A673 (cell line): ENCODE measurements at regions of chr15 and their contacts with region 1.

Region 1: DNA sequence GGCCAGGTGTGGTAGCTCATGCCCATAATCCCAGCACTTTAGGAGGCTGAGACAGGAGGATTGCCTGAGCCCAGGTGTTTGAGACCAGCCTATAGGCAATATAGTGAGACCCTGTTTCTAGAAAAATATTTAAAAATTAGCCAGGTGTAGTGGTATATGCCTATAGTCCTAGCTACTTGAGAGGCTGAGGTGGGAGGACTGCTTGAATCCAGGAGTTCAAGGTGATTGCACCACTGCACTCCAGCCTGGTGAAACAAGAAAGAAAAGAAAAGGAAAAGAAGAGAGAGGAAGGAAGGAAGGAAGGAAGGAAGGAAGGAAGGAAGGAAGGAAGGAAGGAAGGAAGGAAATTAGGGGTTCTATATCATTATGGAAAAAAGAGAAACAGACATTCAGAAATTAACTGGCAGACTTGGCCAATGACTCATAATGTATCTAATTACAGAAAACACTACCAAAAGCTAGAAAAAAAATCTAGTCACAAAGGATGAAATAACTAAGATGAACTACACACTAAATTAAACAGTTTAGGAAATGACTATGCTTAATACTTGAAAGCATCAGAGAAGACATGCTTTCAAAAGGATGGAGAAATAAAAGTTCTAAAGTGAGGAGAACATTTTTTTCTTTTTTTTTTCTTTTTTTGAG is 45.4 kb upstream of the TERB2 start:
- DNase-seq: peak; percentile 96
- H3K4me3 ChIP-seq: no peak overlapping the region
- H3K27ac ChIP-seq: peak overlapping the region; percentile 98
- H3K4me1 ChIP-seq: peaks cover 75% of the 10 kb centered on the region
- H3K27me3 ChIP-seq: no peaks in the 10 kb centered on the region
- CTCF ChIP-seq: no peak

Region 2: DNA sequence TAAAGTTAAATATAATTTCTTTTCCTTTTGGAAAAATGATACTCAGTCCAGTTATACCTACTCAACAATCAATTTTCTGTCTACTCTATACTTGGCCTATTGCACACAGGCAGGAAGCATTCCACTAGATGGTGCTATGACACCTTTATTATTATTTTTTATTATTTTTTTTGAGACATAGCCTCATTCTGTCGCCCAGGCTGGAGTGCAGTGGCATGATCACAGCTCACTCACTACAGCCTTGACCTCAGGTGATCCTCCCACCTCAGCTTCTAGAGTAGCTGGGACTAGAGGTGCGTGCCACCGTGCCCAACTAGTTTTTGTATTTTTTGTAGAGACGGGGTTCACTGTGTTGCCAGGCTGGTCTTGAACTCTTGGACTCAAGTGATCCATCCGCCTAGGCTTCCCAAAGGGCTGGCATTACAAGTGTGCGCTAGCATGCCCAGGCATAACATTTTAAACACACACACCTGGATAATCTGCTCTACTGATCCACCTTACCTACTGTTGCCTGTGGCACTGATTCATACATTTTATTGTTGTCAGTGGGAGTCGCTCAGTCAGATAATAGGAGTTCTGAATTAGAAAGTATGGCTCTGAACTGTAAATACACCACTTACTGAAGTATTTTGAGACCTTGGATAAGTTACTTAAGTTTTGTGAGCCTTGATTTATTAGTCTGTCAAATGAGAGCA is 317.9 kb before region 1 on chr15:
- CTCF ChIA-PET with region 1: interaction called, 6 read pairs
- POLR2A ChIA-PET with region 1: no interaction called
- intact Hi-C with region 1: loop called (anchors 10 kb)
- DNase-seq: peak; percentile 59
- H3K4me3 ChIP-seq: no peak overlapping the region
- H3K27ac ChIP-seq: no peak overlapping the region
- H3K4me1 ChIP-seq: no peaks in the 10 kb centered on the region
- H3K27me3 ChIP-seq: no peaks in the 10 kb centered on the region
- CTCF ChIP-seq: peak; percentile 65

Region 3: DNA sequence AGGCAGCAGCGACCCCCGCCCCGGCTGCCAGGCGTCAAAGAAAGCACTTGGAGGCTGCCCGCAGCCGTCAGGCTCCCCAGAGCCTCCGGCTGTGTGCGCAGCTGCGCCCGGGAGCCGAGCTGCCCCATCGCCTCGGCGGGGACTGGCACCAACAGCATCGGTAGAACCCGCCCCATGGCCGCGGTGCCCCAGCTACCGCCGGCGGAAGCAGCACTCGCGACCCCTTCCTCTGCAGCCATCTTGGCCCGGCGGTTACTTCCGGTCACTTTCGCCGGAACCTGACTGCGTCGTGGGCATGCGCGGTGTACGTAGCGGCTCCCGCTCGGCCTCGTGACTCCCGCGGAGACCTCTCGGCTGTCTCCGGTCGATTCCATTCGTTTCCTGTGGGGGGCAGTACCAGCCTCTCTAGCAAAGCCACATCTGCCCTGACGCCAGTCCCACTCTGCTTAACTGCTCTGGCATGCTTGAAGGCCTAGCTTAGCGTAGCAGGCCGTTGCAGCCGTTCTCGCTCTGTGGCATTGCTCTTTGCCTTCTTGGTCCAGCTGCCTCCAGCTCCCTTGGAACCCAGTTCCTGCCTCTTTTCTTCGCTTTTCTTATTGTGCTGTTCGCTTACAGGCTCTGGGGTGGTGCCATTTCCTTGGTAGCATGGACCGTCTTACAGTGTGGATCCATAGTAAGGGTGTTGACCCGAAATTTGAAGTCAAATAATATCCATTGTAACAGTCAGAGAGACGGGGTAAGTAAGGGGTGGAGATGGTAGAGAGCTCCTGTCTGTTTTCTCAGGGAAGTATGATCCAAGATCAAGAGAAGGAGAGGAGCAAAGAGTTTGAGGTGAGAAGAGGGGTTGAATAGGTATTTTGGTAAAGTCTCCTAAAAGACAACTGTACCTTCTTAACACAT is 247.4 kb before region 1 on chr15 and contains the start of gene SPG11:
- CTCF ChIA-PET with region 1: no interaction called
- POLR2A ChIA-PET with region 1: no interaction called
- intact Hi-C with region 1: loop called (anchors 5 kb)
- DNase-seq: peak; percentile 98
- H3K4me3 ChIP-seq: peak within 1 kb of the TSS; percentile 71
- H3K27ac ChIP-seq: peak within 1 kb of the TSS; percentile 90
- H3K4me1 ChIP-seq: peaks cover 11% of the 10 kb centered on the region
- H3K27me3 ChIP-seq: no peaks in the 10 kb centered on the region
- CTCF ChIP-seq: peak; percentile 91
- total RNA-seq, gene SPG11: 55.4 and 68.5 TPM in 2 replicates

Region 4: GRCh38 chr15:44694416-44694815 is 216.7 kb before region 1 on chr15:
- CTCF ChIA-PET with region 1: no interaction called
- POLR2A ChIA-PET with region 1: no interaction called
- intact Hi-C with region 1: no loop called
- DNase-seq: no peak
- H3K4me3 ChIP-seq: no peak overlapping the region
- H3K27ac ChIP-seq: no peak overlapping the region
- H3K4me1 ChIP-seq: no peaks in the 10 kb centered on the region
- H3K27me3 ChIP-seq: no peaks in the 10 kb centered on the region
- CTCF ChIP-seq: no peak

Region 5: GRCh38 chr15:44728576-44729407 is 182.3 kb before region 1 on chr15:
- CTCF ChIA-PET with region 1: no interaction called
- POLR2A ChIA-PET with region 1: interaction called, 9 read pairs
- intact Hi-C with region 1: loop called (anchors 2 kb)
- DNase-seq: peak; percentile 99
- H3K4me3 ChIP-seq: peak overlapping the region; percentile 81
- H3K27ac ChIP-seq: peak overlapping the region; percentile 95
- H3K4me1 ChIP-seq: peaks cover 42% of the 10 kb centered on the region
- H3K27me3 ChIP-seq: no peaks in the 10 kb centered on the region
- CTCF ChIP-seq: no peak

Region 6: DNA sequence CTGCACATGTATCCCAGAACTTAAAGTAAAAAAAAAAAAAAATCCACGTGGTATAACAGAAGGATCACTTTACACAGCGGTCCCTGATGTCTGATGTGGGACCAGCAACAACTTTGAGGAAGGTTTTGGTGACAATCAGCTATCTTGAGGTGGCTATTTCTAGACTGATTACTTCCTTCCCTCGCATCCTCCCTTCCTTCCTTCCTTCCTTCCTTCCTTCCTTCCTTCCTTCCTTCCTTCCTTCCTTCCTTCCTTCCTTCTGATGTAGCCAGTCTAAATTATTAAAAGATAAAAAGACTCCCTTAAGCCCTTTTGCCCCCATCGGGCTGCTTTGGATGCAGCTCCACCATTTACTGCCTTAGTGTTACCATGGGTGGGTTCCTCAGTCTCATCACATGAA is 126.8 kb after region 1 on chr15:
- CTCF ChIA-PET with region 1: interaction called, 3 read pairs
- POLR2A ChIA-PET with region 1: interaction called, 3 read pairs
- intact Hi-C with region 1: loop called (anchors 1 kb)
- DNase-seq: peak; percentile 90
- H3K4me3 ChIP-seq: no peak overlapping the region
- H3K27ac ChIP-seq: peak overlapping the region; percentile 81
- H3K4me1 ChIP-seq: peaks cover 29% of the 10 kb centered on the region
- H3K27me3 ChIP-seq: no peaks in the 10 kb centered on the region
- CTCF ChIP-seq: no peak